ENCODE measurements at regions of chr6 and their contacts with region 1.

Region 1: DNA sequence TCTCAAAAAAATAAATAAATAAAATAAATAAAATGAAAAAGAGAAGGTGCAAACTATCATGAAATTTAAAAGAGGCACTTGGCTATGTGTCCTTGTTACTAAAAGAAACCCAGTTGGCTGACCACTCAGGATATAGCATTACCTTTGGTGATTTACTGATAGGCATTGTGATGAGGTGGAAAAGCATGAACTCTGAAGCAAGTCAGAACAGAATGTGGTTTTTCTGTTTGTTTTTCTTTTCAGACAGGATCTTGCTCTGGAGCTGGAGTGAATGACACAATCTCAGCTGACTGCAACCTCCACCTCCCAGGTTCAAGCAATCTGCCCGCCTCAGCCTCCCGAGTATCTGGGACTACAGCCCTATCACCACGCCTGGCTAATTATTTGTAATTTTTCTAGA is 31.9 kb downstream of the ZNF184 start:
- DNase-seq: no peak
- ATAC-seq: no peak
- H3K4me3 ChIP-seq: no peak overlapping the region
- H3K27ac ChIP-seq: no peak overlapping the region
- H3K4me1 ChIP-seq: no peaks in the 10 kb centered on the region
- H3K27me3 ChIP-seq: no peaks in the 10 kb centered on the region
- CTCF ChIP-seq: no peak
- POLR2A ChIP-seq: no peak
- RAD21 ChIP-seq: no peak

Region 2: DNA sequence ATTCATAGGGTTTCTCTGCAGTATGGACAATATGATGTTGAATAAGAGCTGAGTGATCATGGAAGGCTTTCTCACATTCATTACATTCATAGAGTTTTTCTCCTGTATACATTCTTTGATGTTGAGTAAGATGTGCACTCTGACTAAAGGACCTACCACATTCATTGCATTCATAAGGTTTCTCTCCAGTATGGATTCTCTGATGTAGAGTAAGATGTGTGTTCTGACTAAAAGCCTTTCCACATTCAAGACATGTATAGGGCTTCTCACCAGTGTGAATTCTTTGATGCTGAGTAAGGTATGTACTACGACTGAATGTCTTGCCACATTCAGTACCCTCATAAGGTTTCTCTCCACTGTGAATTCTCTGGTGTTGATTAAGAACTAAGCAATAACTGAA is 81.8 kb before region 1 on chr6:
- CTCF ChIA-PET with region 1: no interaction called
- POLR2A ChIA-PET with region 1: no interaction called
- RAD21 ChIA-PET with region 1: no interaction called
- intact Hi-C with region 1: loop called (anchors 5 kb)
- DNase-seq: no peak
- ATAC-seq: no peak
- H3K4me3 ChIP-seq: no peak overlapping the region
- H3K27ac ChIP-seq: no peak overlapping the region
- H3K4me1 ChIP-seq: no peaks in the 10 kb centered on the region
- H3K27me3 ChIP-seq: no peaks in the 10 kb centered on the region
- CTCF ChIP-seq: no peak
- POLR2A ChIP-seq: no peak
- RAD21 ChIP-seq: no peak

Measured in HCT116 (cell line).